Adrenal gland (tissue), 19 donors: ENCODE measurements at regions of chr2 and their contacts with region 1.

Region 1: GRCh38 chr2:151409601-151410484 is at the start of gene RIF1:
- DNase-seq: peak; percentile 83 to 94 (median 89)
- H3K4me3 ChIP-seq: peak within 1 kb of the TSS; percentile 96 to 100 (median 99)
- H3K27ac ChIP-seq: peak within 1 kb of the TSS; percentile 30 to 96 (median 82)
- H3K4me1 ChIP-seq: peaks cover 0 to 15% of the 10 kb centered on the region in 2 donors
- H3K27me3 ChIP-seq: no peaks in the 10 kb centered on the region
- CTCF ChIP-seq: peak; percentile 34 to 85 (median 70)
- POLR2A ChIP-seq: peak in 1 of 2 donors; percentile 27
- total RNA-seq, gene RIF1: 11.0 to 50.8 (median 28.7) TPM

Region 2: GRCh38 chr2:151251012-151251411 is 158.8 kb before region 1 on chr2:
- intact Hi-C with region 1: no loop called
- DNase-seq: no peak
- H3K4me3 ChIP-seq: no peak overlapping the region
- H3K27ac ChIP-seq: no peak overlapping the region
- H3K4me1 ChIP-seq: peaks cover 0 to 8% of the 10 kb centered on the region in 2 donors
- H3K27me3 ChIP-seq: no peaks in the 10 kb centered on the region
- CTCF ChIP-seq: no peak
- POLR2A ChIP-seq: no peak

Region 3: DNA sequence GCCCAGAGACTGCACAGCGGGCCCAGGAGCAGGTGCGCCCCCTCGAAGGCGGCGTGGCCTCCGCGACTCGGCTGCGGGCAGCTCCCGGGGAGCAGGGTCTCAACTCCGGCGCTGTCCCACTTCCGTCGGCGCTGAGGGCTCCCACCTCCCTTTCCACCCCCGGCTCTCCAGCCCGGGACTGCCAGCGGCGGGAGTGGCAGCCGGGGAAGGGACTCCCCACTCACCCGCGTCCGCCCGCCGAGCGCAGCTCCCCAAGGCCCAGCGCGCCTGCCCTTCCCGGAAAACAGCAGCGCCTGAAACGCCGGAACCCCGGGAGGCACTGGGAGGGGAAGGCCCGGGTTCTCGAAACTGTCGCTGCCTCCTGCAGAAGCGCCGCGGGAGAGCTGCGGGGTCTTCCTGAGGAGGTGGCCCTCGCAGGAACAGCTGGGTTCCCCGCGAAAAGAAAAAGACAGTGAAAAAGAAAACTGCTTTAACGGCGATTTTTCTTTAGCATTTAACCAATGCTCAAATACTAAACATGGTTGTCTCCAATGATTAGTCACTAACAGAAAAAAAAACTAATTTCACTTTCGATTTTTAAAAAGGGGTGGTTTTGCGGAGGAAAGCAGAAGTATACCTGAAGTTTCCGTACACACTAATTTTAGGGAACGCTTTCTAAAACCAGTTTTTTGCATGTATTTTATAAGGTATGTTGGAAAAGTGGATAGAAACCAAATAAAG is 120.3 kb before region 1 on chr2 and contains the start of gene NMI:
- intact Hi-C with region 1: loop called (anchors 10 kb)
- DNase-seq: peak; percentile 73 to 84 (median 77)
- H3K4me3 ChIP-seq: peak within 1 kb of the TSS; percentile 43 to 94 (median 54)
- H3K27ac ChIP-seq: peak within 1 kb of the TSS; percentile 93 to 99 (median 94)
- H3K4me1 ChIP-seq: peaks cover 4 to 36% of the 10 kb centered on the region in 2 donors
- H3K27me3 ChIP-seq: no peaks in the 10 kb centered on the region
- CTCF ChIP-seq: no peak
- POLR2A ChIP-seq: peak; percentile 43 to 48
- total RNA-seq, gene NMI: 6.6 to 25.1 (median 19.5) TPM

Region 4: DNA sequence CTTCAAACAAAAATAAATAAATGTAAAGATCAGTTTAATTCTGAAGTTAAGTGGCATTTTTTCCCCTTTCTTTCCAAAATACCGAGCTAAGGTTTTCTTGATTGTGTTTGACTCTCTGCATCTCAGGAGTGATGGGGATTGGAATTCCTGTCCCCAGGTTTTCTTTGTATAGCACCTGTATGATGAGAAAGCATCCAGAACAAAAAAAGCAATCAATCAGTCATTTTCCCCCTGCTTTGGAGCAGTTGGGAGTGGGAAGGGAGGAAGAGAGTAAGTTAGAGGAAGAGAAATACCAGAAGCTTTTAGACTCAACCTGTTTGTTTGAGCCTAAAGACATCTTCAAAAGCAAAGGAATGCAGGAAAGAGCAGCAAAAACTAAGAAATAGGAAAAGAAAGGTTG is 88.3 kb after region 1 on chr2:
- intact Hi-C with region 1: no loop called
- DNase-seq: no peak
- H3K4me3 ChIP-seq: no peak overlapping the region
- H3K27ac ChIP-seq: no peak overlapping the region
- H3K4me1 ChIP-seq: no peaks in the 10 kb centered on the region
- H3K27me3 ChIP-seq: no peaks in the 10 kb centered on the region
- CTCF ChIP-seq: no peak
- POLR2A ChIP-seq: no peak